B cell (primary cell): ENCODE measurements at regions of chr20 and their contacts with region 1.

Region 1: GRCh38 chr20:22691369-22692118 is 107.2 kb upstream of the FOXA2 start:
- DNase-seq: peak; percentile 63
- ATAC-seq: peak; percentile 84
- H3K4me3 ChIP-seq: no peak overlapping the region
- H3K4me3 Mint-ChIP-seq: no peak overlapping the region
- H3K27ac ChIP-seq: no peak overlapping the region
- H3K27ac Mint-ChIP-seq: no peak overlapping the region
- H3K4me1 ChIP-seq: peaks cover 0 to 3% of the 10 kb centered on the region in 2 donors
- H3K4me1 Mint-ChIP-seq: no peaks in the 10 kb centered on the region
- H3K27me3 ChIP-seq: no peaks in the 10 kb centered on the region
- H3K27me3 Mint-ChIP-seq: peaks cover 4% of the 10 kb centered on the region
- CTCF ChIP-seq: peak; percentile 81

Region 2: GRCh38 chr20:22763257-22763906 is 71.8 kb after region 1 on chr20:
- CTCF ChIA-PET with region 1: no interaction called
- POLR2A ChIA-PET with region 1: no interaction called
- intact Hi-C with region 1: no loop called
- DNase-seq: no peak
- ATAC-seq: no peak
- H3K4me3 ChIP-seq: no peak overlapping the region
- H3K4me3 Mint-ChIP-seq: no peak overlapping the region
- H3K27ac ChIP-seq: no peak overlapping the region
- H3K27ac Mint-ChIP-seq: no peak overlapping the region
- H3K4me1 ChIP-seq: no peaks in the 10 kb centered on the region
- H3K4me1 Mint-ChIP-seq: no peaks in the 10 kb centered on the region
- H3K27me3 ChIP-seq: no peaks in the 10 kb centered on the region
- H3K27me3 Mint-ChIP-seq: no peaks in the 10 kb centered on the region
- CTCF ChIP-seq: no peak

Region 3: GRCh38 chr20:22775671-22776139 is 84.2 kb after region 1 on chr20:
- CTCF ChIA-PET with region 1: no interaction called
- POLR2A ChIA-PET with region 1: no interaction called
- intact Hi-C with region 1: no loop called
- DNase-seq: no peak
- ATAC-seq: no peak
- H3K4me3 ChIP-seq: no peak overlapping the region
- H3K4me3 Mint-ChIP-seq: no peak overlapping the region
- H3K27ac ChIP-seq: no peak overlapping the region
- H3K27ac Mint-ChIP-seq: no peak overlapping the region
- H3K4me1 ChIP-seq: no peaks in the 10 kb centered on the region
- H3K4me1 Mint-ChIP-seq: no peaks in the 10 kb centered on the region
- H3K27me3 ChIP-seq: no peaks in the 10 kb centered on the region
- H3K27me3 Mint-ChIP-seq: peaks cover 9% of the 10 kb centered on the region
- CTCF ChIP-seq: no peak

Region 4: GRCh38 chr20:23340524-23340923 is 649.0 kb after region 1 on chr20:
- CTCF ChIA-PET with region 1: interaction called, 25 read pairs
- POLR2A ChIA-PET with region 1: no interaction called
- intact Hi-C with region 1: no loop called
- DNase-seq: no peak
- ATAC-seq: no peak
- H3K4me3 ChIP-seq: no peak overlapping the region
- H3K4me3 Mint-ChIP-seq: no peak overlapping the region
- H3K27ac ChIP-seq: no peak overlapping the region
- H3K27ac Mint-ChIP-seq: no peak overlapping the region
- H3K4me1 ChIP-seq: no peaks in the 10 kb centered on the region
- H3K4me1 Mint-ChIP-seq: no peaks in the 10 kb centered on the region
- H3K27me3 ChIP-seq: no peaks in the 10 kb centered on the region
- H3K27me3 Mint-ChIP-seq: peaks cover 7% of the 10 kb centered on the region
- CTCF ChIP-seq: peak; percentile 15